Activated naive CD4-positive, alpha-beta T cell treated with anti-CD3 and anti-CD28 coated beads for 36 hours (primary cell): ENCODE measurements at regions of chr16 and their contacts with region 1.

Region 1: GRCh38 chr16:1378804-1379303 is 27.1 kb downstream of the GNPTG start:
- DNase-seq: peak; percentile 82
- H3K4me3 Mint-ChIP-seq: peak overlapping the region; percentile 83
- H3K27ac Mint-ChIP-seq: peak overlapping the region; percentile 93
- H3K4me1 Mint-ChIP-seq: peaks cover 17% of the 10 kb centered on the region
- H3K27me3 Mint-ChIP-seq: no peaks in the 10 kb centered on the region

Region 2: DNA sequence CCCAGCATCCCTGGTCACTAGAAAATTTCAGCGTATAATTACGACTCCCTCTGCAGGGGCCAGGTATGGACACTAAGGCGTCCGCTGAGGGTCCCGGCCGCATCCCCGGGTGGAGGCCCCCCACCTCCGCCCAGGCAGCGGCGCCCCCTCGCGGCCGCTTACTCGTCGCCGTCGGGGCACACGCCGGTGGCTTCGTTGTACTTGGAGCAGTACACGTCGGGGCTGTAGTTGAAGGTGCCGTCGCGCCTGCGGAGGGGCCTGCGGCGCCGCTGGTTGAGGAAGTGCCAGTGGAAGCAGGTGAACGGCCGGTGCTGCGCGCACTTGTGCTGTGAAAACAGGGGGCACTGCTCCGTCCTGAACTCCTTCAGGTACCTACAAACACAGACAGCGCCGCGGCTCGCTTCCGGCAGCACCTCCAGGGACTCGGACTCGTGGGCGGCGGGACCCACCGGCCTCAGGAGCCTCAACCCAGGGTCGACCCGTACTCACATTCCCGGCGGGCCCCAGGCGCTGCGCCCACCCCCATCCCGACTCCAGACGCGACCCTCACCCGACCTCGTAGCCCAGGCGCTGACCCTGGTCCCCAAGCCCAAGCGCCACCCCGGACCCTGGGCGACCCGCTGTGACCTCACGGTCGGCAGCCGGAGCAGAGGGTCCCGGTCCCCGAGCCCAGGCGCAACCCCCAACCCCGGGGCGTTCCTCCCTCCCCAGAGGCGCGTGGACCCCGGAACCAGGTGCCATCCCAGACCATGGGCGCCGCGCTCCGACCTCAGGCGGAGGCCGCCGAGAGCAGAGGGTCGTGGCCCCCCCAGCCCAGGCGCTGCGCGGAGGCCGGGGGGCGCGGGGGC is 35.1 kb after region 1 on chr16:
- CTCF ChIA-PET with region 1: no interaction called
- intact Hi-C with region 1: loop called (anchors 5 kb)
- DNase-seq: peak; percentile 79
- H3K4me3 Mint-ChIP-seq: peak overlapping the region; percentile 84
- H3K27ac Mint-ChIP-seq: peak overlapping the region; percentile 86
- H3K4me1 Mint-ChIP-seq: peaks cover 33% of the 10 kb centered on the region
- H3K27me3 Mint-ChIP-seq: no peaks in the 10 kb centered on the region

Region 3: GRCh38 chr16:1782352-1783091 is 403.7 kb after region 1 on chr16 and contains the starts of genes NUBP2 and SPSB3:
- CTCF ChIA-PET with region 1: no interaction called
- intact Hi-C with region 1: loop called (anchors 2 kb)
- DNase-seq: peak; percentile 100
- H3K4me3 Mint-ChIP-seq: peak within 1 kb of the TSS; percentile 90
- H3K27ac Mint-ChIP-seq: peak within 1 kb of the TSS; percentile 73
- H3K4me1 Mint-ChIP-seq: peaks cover 28% of the 10 kb centered on the region
- H3K27me3 Mint-ChIP-seq: no peaks in the 10 kb centered on the region
- total RNA-seq, gene NUBP2: 37.9 to 42.4 TPM
- total RNA-seq, gene SPSB3: 14.0 to 17.0 TPM